ENCODE measurements at regions of chr14 and their contacts with region 1.

Region 1: GRCh38 chr14:95507701-95508103 is 8.7 kb downstream of the SYNE3 start:
- DNase-seq: peak; percentile 51
- ATAC-seq: peak; percentile 64
- H3K4me3 Mint-ChIP-seq: no peak overlapping the region
- H3K27ac Mint-ChIP-seq: peak overlapping the region; percentile 66
- H3K4me1 Mint-ChIP-seq: peaks cover 78% of the 10 kb centered on the region
- H3K27me3 Mint-ChIP-seq: no peaks in the 10 kb centered on the region

Region 2: DNA sequence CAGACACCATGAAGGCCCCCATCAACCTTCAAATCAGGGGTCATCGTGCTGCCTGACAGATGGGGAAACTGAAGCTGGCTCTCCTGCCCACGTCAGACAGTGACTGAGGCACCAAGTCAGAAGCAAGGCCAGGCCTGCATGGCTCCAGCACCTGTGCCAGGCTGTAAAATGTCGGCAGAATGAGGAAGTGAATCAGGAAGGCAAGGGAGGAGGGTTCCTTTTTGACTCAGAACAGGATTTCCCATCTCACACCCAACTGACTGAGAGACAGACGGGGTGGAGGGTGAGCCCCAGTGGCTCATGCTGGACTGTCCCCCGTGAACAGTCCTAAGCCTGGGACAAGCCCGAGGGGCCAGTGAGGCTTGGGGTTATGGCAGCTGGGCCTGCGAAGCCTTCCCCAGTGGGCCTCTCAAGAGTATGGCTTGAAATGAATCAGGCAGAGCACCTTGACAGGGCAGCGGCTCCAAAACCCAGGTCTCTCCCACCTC is 12.1 kb before region 1 on chr14:
- CTCF ChIA-PET with region 1: interaction called, 18 read pairs
- POLR2A ChIA-PET with region 1: interaction called, 4 read pairs
- DNase-seq: no peak
- ATAC-seq: peak; percentile 32
- H3K4me3 Mint-ChIP-seq: peak overlapping the region; percentile 18
- H3K27ac Mint-ChIP-seq: peak overlapping the region; percentile 89
- H3K4me1 Mint-ChIP-seq: peaks cover 65% of the 10 kb centered on the region
- H3K27me3 Mint-ChIP-seq: no peaks in the 10 kb centered on the region